Activated naive CD4-positive, alpha-beta T cell treated with anti-CD3 and anti-CD28 coated beads, Interleukin-2, amount 10 ng/mL, durations not matched to agents 7 days and 5 days (primary cell): ENCODE measurements at regions of chr6 and their contacts with region 1.

Region 1: DNA sequence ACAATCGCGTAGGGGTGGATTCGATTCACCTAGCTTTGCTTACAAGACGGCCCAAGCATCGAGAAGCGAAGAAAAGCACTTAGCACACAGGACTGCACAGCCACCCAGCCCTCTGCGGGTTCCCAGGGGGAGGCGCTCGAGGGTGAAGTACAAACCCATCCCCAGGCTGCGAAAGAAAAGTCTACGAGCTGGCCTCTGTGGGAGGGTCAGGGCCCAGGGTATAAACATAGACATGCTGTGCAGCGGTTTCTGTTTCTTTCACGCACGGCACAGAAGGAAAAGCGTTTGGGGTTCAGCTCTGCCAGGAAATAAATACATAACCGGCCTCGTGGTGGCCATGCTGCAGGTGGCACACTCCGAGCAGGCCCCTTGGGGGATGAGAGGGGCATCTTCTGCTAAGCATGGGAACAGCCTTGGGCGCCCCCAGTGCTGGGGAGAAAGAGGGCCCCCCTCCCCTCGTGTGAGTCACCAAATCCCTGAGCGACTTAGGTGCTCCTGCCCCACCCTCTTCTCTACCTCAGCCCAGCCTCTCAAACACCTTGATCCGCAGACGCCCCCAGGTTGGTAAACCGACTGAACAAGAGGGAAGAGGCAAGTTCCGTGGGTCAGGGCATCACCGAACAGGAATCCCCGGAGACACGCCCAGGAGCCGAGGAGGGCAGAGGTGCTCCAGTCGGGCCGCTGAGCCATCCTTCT is 91.6 kb upstream of the RIPOR2 start:
- DNase-seq: peak; percentile 88
- H3K4me3 Mint-ChIP-seq: peak overlapping the region; percentile 62
- H3K27ac Mint-ChIP-seq: peak overlapping the region; percentile 92
- H3K4me1 Mint-ChIP-seq: peaks cover 53% of the 10 kb centered on the region
- H3K27me3 Mint-ChIP-seq: no peaks in the 10 kb centered on the region

Region 2: GRCh38 chr6:25006565-25007001 is 20.8 kb before region 1 on chr6:
- CTCF ChIA-PET with region 1: interaction called, 10 read pairs
- DNase-seq: peak; percentile 77
- H3K4me3 Mint-ChIP-seq: peak overlapping the region; percentile 41
- H3K27ac Mint-ChIP-seq: peak overlapping the region; percentile 89
- H3K4me1 Mint-ChIP-seq: peaks cover 95% of the 10 kb centered on the region
- H3K27me3 Mint-ChIP-seq: no peaks in the 10 kb centered on the region

Region 3: GRCh38 chr6:25053875-25054371 is 26.6 kb after region 1 on chr6:
- CTCF ChIA-PET with region 1: interaction called, 69 read pairs
- DNase-seq: no peak
- H3K4me3 Mint-ChIP-seq: no peak overlapping the region
- H3K27ac Mint-ChIP-seq: no peak overlapping the region
- H3K4me1 Mint-ChIP-seq: peaks cover 86% of the 10 kb centered on the region
- H3K27me3 Mint-ChIP-seq: no peaks in the 10 kb centered on the region

Region 4: DNA sequence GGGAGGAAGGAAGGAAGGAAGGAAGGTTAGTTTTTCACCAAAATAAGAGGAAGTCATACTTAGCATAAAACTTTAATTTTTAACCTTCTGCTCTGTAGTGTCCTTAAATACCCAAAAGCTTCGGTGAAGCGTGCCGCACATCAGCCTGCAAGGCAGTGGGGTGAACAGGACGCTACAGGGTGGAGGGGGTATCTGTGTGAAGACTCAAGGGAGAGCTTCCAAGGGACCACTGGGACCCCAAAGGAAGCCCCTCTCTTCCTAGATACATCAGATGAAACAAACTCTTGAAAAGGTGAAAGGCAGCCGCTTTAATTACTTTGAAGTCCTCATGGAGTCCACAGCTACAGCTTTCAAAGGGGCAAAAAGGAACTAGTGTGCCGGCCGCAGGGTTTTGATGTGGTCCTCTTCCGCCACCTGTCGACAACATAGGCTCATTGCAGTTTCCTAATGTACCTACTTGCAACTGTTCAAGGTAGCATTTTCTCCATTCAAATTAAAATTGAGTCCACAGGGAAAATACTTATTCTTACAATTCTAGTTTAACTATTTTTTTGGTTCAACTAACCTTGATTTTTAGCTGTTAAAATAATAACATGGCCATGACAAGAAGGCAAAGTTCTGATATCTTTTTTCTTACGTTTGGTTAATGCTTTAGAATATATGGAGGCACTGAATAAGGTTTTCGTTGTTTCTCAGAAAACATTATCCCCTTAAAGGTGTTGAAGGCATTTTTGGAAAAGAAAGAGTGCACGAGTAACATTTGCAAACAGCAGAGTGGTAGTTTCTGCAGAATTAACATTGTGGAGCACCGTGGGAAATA is 43.4 kb after region 1 on chr6:
- CTCF ChIA-PET with region 1: interaction called, 138 read pairs
- DNase-seq: peak; percentile 86
- H3K4me3 Mint-ChIP-seq: peak overlapping the region; percentile 21
- H3K27ac Mint-ChIP-seq: peak overlapping the region; percentile 91
- H3K4me1 Mint-ChIP-seq: peaks cover 11% of the 10 kb centered on the region
- H3K27me3 Mint-ChIP-seq: peaks cover 7% of the 10 kb centered on the region